CD8-positive, alpha-beta T cell (primary cell): ENCODE measurements at regions of chr1 and their contacts with region 1.

Region 1: GRCh38 chr1:19903600-19903999 is 19.8 kb downstream of the PLA2G2E start:
- DNase-seq: no peak
- ATAC-seq: no peak
- H3K4me3 ChIP-seq: no peak overlapping the region
- H3K4me3 Mint-ChIP-seq: no peak overlapping the region
- H3K27ac ChIP-seq: no peak overlapping the region
- H3K27ac Mint-ChIP-seq: no peak overlapping the region
- H3K4me1 ChIP-seq: no peaks in the 10 kb centered on the region
- H3K4me1 Mint-ChIP-seq: no peaks in the 10 kb centered on the region
- H3K27me3 ChIP-seq: no peaks in the 10 kb centered on the region
- H3K27me3 Mint-ChIP-seq: no peaks in the 10 kb centered on the region
- CTCF ChIP-seq: no peak

Region 2: DNA sequence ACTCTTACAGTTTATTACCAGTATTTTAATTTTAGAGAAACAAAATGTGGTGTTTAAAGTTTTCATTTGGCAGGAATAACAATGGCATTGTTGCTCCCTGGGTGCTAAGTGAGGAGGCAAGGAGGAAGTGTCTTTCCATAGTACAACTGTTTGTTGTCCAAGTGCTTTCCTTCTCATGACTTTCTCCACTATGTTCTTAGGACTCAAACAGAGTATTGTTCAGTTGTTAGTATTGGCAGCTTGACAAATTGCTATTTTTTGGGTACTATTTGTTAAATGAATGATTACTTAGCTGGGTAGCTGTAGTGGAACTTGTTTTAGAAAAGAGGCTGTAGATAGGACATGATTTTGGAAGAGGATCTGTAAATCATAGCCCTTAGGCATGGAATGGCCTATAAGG is 13.9 kb before region 1 on chr1:
- CTCF ChIA-PET with region 1: no interaction called
- POLR2A ChIA-PET with region 1: no interaction called
- intact Hi-C with region 1: loop called in 1 of 2 experiments (anchors 1 kb)
- DNase-seq: no peak
- ATAC-seq: no peak
- H3K4me3 ChIP-seq: no peak overlapping the region
- H3K4me3 Mint-ChIP-seq: no peak overlapping the region
- H3K27ac ChIP-seq: no peak overlapping the region
- H3K27ac Mint-ChIP-seq: no peak overlapping the region
- H3K4me1 ChIP-seq: no peaks in the 10 kb centered on the region
- H3K4me1 Mint-ChIP-seq: peaks cover 40% of the 10 kb centered on the region
- H3K27me3 ChIP-seq: no peaks in the 10 kb centered on the region
- H3K27me3 Mint-ChIP-seq: no peaks in the 10 kb centered on the region
- CTCF ChIP-seq: no peak

Region 3: GRCh38 chr1:20037877-20038276 is 134.3 kb after region 1 on chr1:
- CTCF ChIA-PET with region 1: no interaction called
- POLR2A ChIA-PET with region 1: no interaction called
- intact Hi-C with region 1: no loop called
- DNase-seq: no peak
- ATAC-seq: no peak
- H3K4me3 ChIP-seq: no peak overlapping the region
- H3K4me3 Mint-ChIP-seq: no peak overlapping the region
- H3K27ac ChIP-seq: no peak overlapping the region
- H3K27ac Mint-ChIP-seq: no peak overlapping the region
- H3K4me1 ChIP-seq: peaks cover 11% of the 10 kb centered on the region
- H3K4me1 Mint-ChIP-seq: peaks cover 10% of the 10 kb centered on the region
- H3K27me3 ChIP-seq: no peaks in the 10 kb centered on the region
- H3K27me3 Mint-ChIP-seq: peaks cover 19% of the 10 kb centered on the region
- CTCF ChIP-seq: no peak